Naive thymus-derived CD4-positive, alpha-beta T cell (primary cell): ENCODE measurements at regions of chr14 and their contacts with region 1.

Region 1: DNA sequence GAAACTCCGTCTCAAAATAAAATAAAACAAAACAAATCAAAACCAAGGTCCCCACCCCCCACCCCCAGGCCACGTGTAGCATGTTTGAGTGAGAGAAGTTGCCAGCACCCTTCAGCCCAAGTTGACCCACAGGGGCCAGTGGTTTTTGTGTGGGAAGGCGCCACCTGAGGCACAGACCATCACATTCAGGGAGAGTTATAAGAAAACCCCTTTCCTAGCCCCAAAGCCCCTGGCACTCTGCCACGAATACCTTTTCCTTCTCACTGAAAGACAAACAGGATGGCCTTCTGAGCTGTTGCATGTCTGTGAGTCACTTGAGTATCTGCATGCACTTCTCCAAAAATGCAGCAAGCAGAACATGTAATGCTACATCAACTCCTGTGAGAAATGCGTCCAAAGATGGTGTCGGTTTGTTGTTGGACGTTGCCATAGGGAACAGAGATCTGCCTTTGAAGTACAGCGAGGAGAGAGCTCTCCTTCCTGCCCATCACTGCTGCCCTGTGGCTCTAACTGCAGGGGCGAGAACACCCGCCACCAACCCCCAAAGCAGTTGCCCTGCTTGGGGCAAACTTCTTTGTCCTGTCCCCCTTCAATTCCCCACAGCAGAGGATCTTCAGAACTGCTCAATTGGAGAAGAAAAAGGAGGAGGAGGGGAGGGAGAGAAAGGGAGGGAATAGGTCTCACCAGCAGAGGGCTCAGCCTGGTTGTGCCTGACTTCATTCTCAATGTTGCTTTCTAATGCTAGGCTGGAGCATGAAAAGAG is 2.7 kb upstream of the TRAF3 start:
- DNase-seq: peak; percentile 39 to 85 (median 76)
- ATAC-seq: peak; percentile 52
- H3K4me3 ChIP-seq: no peak overlapping the region
- H3K4me3 Mint-ChIP-seq: peak overlapping the region; percentile 48 to 79 (median 63)
- H3K27ac ChIP-seq: peak overlapping the region; percentile 79
- H3K27ac Mint-ChIP-seq: peak overlapping the region; percentile 83 to 97 (median 92)
- H3K4me1 ChIP-seq: peaks cover 13 to 30% of the 10 kb centered on the region in 2 donors
- H3K4me1 Mint-ChIP-seq: peaks cover 14 to 44% (median 35%) of the 10 kb centered on the region in 7 donors
- H3K27me3 ChIP-seq: no peaks in the 10 kb centered on the region
- H3K27me3 Mint-ChIP-seq: no peaks in the 10 kb centered on the region

Region 2: GRCh38 chr14:102509744-102510615 is 264.6 kb before region 1 on chr14 and contains the start of gene ANKRD9:
- CTCF ChIA-PET with region 1: no interaction called
- POLR2A ChIA-PET with region 1: no interaction called
- intact Hi-C with region 1: loop called in 1 of 2 experiments (anchors 5 kb)
- DNase-seq: peak; percentile 48 to 94 (median 66)
- ATAC-seq: peak; percentile 83
- H3K4me3 ChIP-seq: peak within 1 kb of the TSS; percentile 75
- H3K4me3 Mint-ChIP-seq: peak within 1 kb of the TSS; percentile 85 to 91 (median 88)
- H3K27ac ChIP-seq: peak within 1 kb of the TSS; percentile 58
- H3K27ac Mint-ChIP-seq: peak within 1 kb of the TSS in 8 of 9 donors; percentile 20 to 74 (median 59)
- H3K4me1 ChIP-seq: peaks cover 4 to 14% of the 10 kb centered on the region in 2 donors
- H3K4me1 Mint-ChIP-seq: peaks cover 0 to 21% (median 10%) of the 10 kb centered on the region in 7 donors
- H3K27me3 ChIP-seq: no peaks in the 10 kb centered on the region
- H3K27me3 Mint-ChIP-seq: peaks cover 0 to 3% (median 0%) of the 10 kb centered on the region in 5 donors
- total RNA-seq, gene ANKRD9: 1.1 to 8.1 (median 2.2) TPM

Region 3: DNA sequence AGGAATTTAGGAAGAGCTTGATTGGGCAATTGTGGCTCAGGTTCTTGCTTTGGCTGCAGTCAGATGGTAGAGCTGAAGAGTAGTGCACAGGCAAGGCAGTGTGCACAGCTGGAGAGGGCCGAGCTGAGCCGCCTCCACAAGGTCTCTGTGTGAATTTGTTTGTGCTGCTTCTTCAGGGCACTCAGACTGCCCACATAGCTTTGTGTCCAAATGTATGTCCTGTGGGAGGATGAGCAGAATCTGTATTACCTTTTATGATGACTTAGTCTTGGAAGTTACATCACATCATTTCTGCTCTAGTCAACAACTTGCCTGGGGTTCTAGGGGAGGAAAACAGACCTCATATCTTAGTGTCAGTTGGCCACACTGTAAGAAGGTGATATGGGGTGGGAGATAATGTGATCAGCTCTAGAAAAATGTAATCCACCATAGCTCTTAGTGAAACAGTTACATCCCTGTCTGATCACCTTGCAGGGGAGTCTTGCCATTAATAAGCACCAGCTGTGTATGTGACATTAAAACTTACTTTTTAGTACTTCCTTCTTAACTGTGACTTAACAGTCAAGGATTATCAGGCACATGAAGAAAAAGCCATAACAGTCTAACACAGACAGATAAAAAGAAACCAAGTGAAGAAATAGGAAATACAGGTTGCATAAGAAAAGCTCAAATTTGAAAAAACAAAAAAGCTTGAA is 128.7 kb before region 1 on chr14:
- CTCF ChIA-PET with region 1: no interaction called
- POLR2A ChIA-PET with region 1: no interaction called
- intact Hi-C with region 1: no loop called
- DNase-seq: no peak
- ATAC-seq: peak; percentile 66
- H3K4me3 ChIP-seq: no peak overlapping the region
- H3K4me3 Mint-ChIP-seq: no peak overlapping the region
- H3K27ac ChIP-seq: no peak overlapping the region
- H3K27ac Mint-ChIP-seq: peak overlapping the region in 5 of 9 donors; percentile 6 to 72 (median 32)
- H3K4me1 ChIP-seq: peaks cover 0 to 20% of the 10 kb centered on the region in 2 donors
- H3K4me1 Mint-ChIP-seq: peaks cover 33 to 89% (median 82%) of the 10 kb centered on the region in 7 donors
- H3K27me3 ChIP-seq: no peaks in the 10 kb centered on the region
- H3K27me3 Mint-ChIP-seq: no peaks in the 10 kb centered on the region

Region 4: GRCh38 chr14:102795060-102795925 is 20.7 kb after region 1 on chr14:
- CTCF ChIA-PET with region 1: no interaction called
- POLR2A ChIA-PET with region 1: no interaction called
- intact Hi-C with region 1: loop called in 1 of 2 experiments (anchors 2 kb)
- DNase-seq: peak in 4 of 9 donors; percentile 29 to 49 (median 42)
- ATAC-seq: peak; percentile 86
- H3K4me3 ChIP-seq: no peak overlapping the region
- H3K4me3 Mint-ChIP-seq: peak overlapping the region in 7 of 10 donors; percentile 16 to 66 (median 43)
- H3K27ac ChIP-seq: peak overlapping the region; percentile 9
- H3K27ac Mint-ChIP-seq: peak overlapping the region; percentile 42 to 93 (median 85)
- H3K4me1 ChIP-seq: peaks cover 12 to 30% of the 10 kb centered on the region in 2 donors
- H3K4me1 Mint-ChIP-seq: peaks cover 40 to 83% (median 66%) of the 10 kb centered on the region in 7 donors
- H3K27me3 ChIP-seq: no peaks in the 10 kb centered on the region
- H3K27me3 Mint-ChIP-seq: no peaks in the 10 kb centered on the region

Region 5: GRCh38 chr14:102882226-102882906 is 107.8 kb after region 1 on chr14:
- CTCF ChIA-PET with region 1: no interaction called
- POLR2A ChIA-PET with region 1: no interaction called
- intact Hi-C with region 1: loop called in 1 of 2 experiments (anchors 10 kb)
- DNase-seq: no peak
- ATAC-seq: no peak
- H3K4me3 ChIP-seq: no peak overlapping the region
- H3K4me3 Mint-ChIP-seq: no peak overlapping the region
- H3K27ac ChIP-seq: no peak overlapping the region
- H3K27ac Mint-ChIP-seq: peak overlapping the region in 5 of 9 donors; percentile 1 to 68 (median 27)
- H3K4me1 ChIP-seq: no peaks in the 10 kb centered on the region
- H3K4me1 Mint-ChIP-seq: peaks cover 0 to 17% (median 0%) of the 10 kb centered on the region in 7 donors
- H3K27me3 ChIP-seq: no peaks in the 10 kb centered on the region
- H3K27me3 Mint-ChIP-seq: no peaks in the 10 kb centered on the region

Region 6: GRCh38 chr14:103057365-103058096 is 283.0 kb after region 1 on chr14 and contains the start of gene CDC42BPB:
- CTCF ChIA-PET with region 1: no interaction called
- POLR2A ChIA-PET with region 1: interaction called, 4 read pairs
- intact Hi-C with region 1: loop called in 1 of 2 experiments (anchors 10 kb)
- DNase-seq: peak; percentile 32 to 60 (median 52)
- ATAC-seq: peak; percentile 91
- H3K4me3 ChIP-seq: peak within 1 kb of the TSS; percentile 39
- H3K4me3 Mint-ChIP-seq: peak within 1 kb of the TSS; percentile 59 to 86 (median 74)
- H3K27ac ChIP-seq: peak within 1 kb of the TSS; percentile 21
- H3K27ac Mint-ChIP-seq: peak within 1 kb of the TSS in 2 of 9 donors; percentile 15 to 49
- H3K4me1 ChIP-seq: no peaks in the 10 kb centered on the region
- H3K4me1 Mint-ChIP-seq: peaks cover 0 to 13% (median 11%) of the 10 kb centered on the region in 7 donors
- H3K27me3 ChIP-seq: peaks cover 3 to 7% of the 10 kb centered on the region in 2 donors
- H3K27me3 Mint-ChIP-seq: peaks cover 9 to 62% (median 14%) of the 10 kb centered on the region in 5 donors
- total RNA-seq, gene CDC42BPB: 0.87 to 16.0 (median 5.5) TPM